Head of caudate nucleus (tissue), 42 donors: ENCODE measurements at regions of chr1 and their contacts with region 1.

Region 1: GRCh38 chr1:19670787-19671186 is 6.1 kb downstream of the HTR6 start:
- DNase-seq: no peak

Region 2: GRCh38 chr1:19622204-19622603 is 48.6 kb before region 1 on chr1:
- intact Hi-C with region 1: no loop called
- DNase-seq: no peak

Region 3: GRCh38 chr1:19706136-19706535 is 35.3 kb after region 1 on chr1:
- intact Hi-C with region 1: loop called (anchors 2 kb)
- DNase-seq: no peak